Ovary (tissue), 10 donors: ENCODE measurements at regions of chr10 and their contacts with region 1.

Region 1: GRCh38 chr10:4131407-4132228 is 346.6 kb upstream of the KLF6 start:
- DNase-seq: no peak
- H3K4me3 ChIP-seq: no peak overlapping the region
- H3K27ac ChIP-seq: no peak overlapping the region
- H3K4me1 ChIP-seq: no peaks in the 10 kb centered on the region
- H3K27me3 ChIP-seq: no peaks in the 10 kb centered on the region
- CTCF ChIP-seq: no peak
- EP300 ChIP-seq: no peak
- POLR2A ChIP-seq: no peak

Region 2: GRCh38 chr10:3948843-3949242 is 182.8 kb before region 1 on chr10:
- intact Hi-C with region 1: no loop called
- DNase-seq: peak in 1 of 5 donors; percentile 44
- H3K4me3 ChIP-seq: no peak overlapping the region
- H3K27ac ChIP-seq: no peak overlapping the region
- H3K4me1 ChIP-seq: no peaks in the 10 kb centered on the region
- H3K27me3 ChIP-seq: no peaks in the 10 kb centered on the region
- CTCF ChIP-seq: no peak
- EP300 ChIP-seq: no peak
- POLR2A ChIP-seq: no peak

Region 3: GRCh38 chr10:4196771-4197390 is 65.3 kb after region 1 on chr10:
- intact Hi-C with region 1: loop called in 1 of 4 experiments (anchors 2 kb)
- DNase-seq: no peak
- H3K4me3 ChIP-seq: no peak overlapping the region
- H3K27ac ChIP-seq: no peak overlapping the region
- H3K4me1 ChIP-seq: peaks cover 1% of the 10 kb centered on the region
- H3K27me3 ChIP-seq: no peaks in the 10 kb centered on the region
- CTCF ChIP-seq: no peak
- EP300 ChIP-seq: no peak
- POLR2A ChIP-seq: no peak